ENCODE measurements at regions of chr3 and their contacts with region 1.

Region 1: GRCh38 chr3:195542698-195543499 is at the start of gene PPP1R2:
- DNase-seq: peak; percentile 88 to 94 (median 92)
- H3K4me3 ChIP-seq: peak within 1 kb of the TSS; percentile 66 to 82
- H3K4me3 Mint-ChIP-seq: peak within 1 kb of the TSS; percentile 88 to 96 (median 91)
- H3K27ac ChIP-seq: peak within 1 kb of the TSS; percentile 98
- H3K27ac Mint-ChIP-seq: peak within 1 kb of the TSS; percentile 92 to 97 (median 95)
- H3K4me1 ChIP-seq: peaks cover 77% of the 10 kb centered on the region
- H3K4me1 Mint-ChIP-seq: peaks cover 47 to 90% (median 66%) of the 10 kb centered on the region in 4 donors
- H3K27me3 ChIP-seq: no peaks in the 10 kb centered on the region
- H3K27me3 Mint-ChIP-seq: no peaks in the 10 kb centered on the region
- total RNA-seq, gene PPP1R2: 136 to 137 TPM

Region 2: DNA sequence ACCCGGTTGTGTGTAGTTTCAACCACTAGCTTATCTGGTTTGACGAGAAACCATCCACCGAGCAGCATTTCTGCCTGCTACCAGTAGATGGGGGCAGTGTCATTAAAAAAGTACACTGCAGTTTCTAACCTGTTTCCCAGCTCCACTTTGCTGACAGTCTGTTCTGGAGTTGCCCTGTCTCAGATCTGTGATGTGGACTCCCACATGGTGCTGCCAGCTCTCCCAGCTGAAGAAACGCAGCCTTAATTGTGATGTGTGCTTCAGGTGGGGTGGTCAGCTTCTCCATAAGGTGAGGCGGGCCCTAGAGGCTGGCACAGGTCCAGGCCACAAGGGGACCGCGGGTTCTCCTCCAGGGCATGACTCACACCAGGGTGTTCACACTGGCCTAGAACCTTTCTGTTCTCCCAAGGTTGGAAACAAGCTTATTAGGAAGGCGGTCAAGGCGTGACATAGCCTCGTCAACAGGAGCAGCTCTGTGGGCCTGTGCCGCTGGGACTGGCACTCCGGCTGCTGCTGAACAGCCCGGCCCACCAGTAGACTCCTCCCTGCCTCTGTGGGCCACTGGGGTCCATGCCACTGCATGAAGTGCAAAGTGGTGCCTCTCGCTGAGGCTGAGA is 860.1 kb before region 1 on chr3:
- CTCF ChIA-PET with region 1: no interaction called
- POLR2A ChIA-PET with region 1: interaction called, 12 read pairs
- intact Hi-C with region 1: no loop called
- DNase-seq: peak; percentile 59 to 74 (median 69)
- H3K4me3 ChIP-seq: no peak overlapping the region
- H3K4me3 Mint-ChIP-seq: peak overlapping the region in 1 of 8 donors; percentile 23
- H3K27ac ChIP-seq: no peak overlapping the region
- H3K27ac Mint-ChIP-seq: peak overlapping the region in 2 of 7 donors; percentile 4 to 62
- H3K4me1 ChIP-seq: peaks cover 35% of the 10 kb centered on the region
- H3K4me1 Mint-ChIP-seq: peaks cover 16 to 42% (median 29%) of the 10 kb centered on the region in 4 donors
- H3K27me3 ChIP-seq: no peaks in the 10 kb centered on the region
- H3K27me3 Mint-ChIP-seq: no peaks in the 10 kb centered on the region

Region 3: DNA sequence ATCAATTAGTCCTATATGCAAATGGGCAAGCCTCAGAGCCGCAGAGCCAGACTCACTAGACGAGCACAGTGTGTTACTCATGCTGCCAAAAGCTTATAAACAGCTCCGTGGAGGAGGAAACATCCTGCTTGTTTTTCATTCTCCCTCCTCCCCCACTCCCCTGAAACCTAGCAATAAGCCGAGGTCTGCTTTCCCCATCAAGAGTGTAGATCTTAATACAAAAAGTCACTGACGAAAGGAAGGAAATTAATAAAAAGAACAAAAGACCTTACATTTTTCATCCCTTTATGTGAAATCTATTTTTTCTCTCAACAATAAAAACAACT is 360.5 kb before region 1 on chr3:
- CTCF ChIA-PET with region 1: no interaction called
- POLR2A ChIA-PET with region 1: no interaction called
- intact Hi-C with region 1: no loop called
- DNase-seq: peak in 2 of 5 donors; percentile 7 to 13
- H3K4me3 ChIP-seq: no peak overlapping the region
- H3K4me3 Mint-ChIP-seq: peak overlapping the region; percentile 49 to 77 (median 66)
- H3K27ac ChIP-seq: no peak overlapping the region
- H3K27ac Mint-ChIP-seq: peak overlapping the region in 5 of 7 donors; percentile 5 to 67 (median 10)
- H3K4me1 ChIP-seq: peaks cover 56% of the 10 kb centered on the region
- H3K4me1 Mint-ChIP-seq: peaks cover 44 to 61% (median 52%) of the 10 kb centered on the region in 4 donors
- H3K27me3 ChIP-seq: no peaks in the 10 kb centered on the region
- H3K27me3 Mint-ChIP-seq: no peaks in the 10 kb centered on the region

Region 4: DNA sequence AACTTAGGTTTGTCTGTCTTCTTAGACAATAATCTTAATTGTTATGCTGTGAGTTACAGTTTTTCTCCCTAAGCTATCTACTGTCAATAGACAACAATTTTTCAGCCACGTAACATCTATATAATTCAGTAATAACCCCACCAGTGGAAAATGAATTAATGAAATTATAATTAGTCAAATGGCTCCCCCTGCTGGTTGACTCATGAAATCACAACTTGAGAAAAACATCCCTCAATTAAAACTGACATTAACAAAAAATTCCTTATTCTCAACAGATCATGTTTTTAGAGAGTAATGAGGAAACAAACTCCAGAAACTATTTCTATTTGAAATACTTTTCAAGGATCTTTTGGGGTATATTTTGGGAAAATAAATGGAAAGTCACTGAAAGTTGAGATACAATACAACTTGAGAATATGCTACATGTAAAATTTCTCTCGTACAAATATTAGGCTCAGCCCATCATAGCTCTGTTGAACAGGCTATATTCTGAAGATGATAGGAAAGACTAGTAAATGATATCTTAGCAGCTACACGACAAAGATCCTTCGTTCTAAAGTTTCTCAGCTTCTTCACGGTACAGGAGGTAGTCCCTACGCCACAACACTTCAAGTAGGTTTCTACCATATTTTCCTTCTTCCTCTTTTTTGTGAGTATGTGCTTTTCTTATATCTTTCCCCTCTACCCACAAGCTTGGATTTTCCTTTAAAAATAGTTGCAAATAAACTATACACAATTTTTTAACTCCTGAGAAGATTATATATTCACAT is 20.5 kb before region 1 on chr3:
- CTCF ChIA-PET with region 1: interaction called, 24 read pairs
- POLR2A ChIA-PET with region 1: interaction called, 53 read pairs
- intact Hi-C with region 1: loop called (anchors 2 kb)
- DNase-seq: peak in 4 of 5 donors; percentile 46 to 56 (median 54)
- H3K4me3 ChIP-seq: no peak overlapping the region
- H3K4me3 Mint-ChIP-seq: peak overlapping the region in 1 of 8 donors; percentile 31
- H3K27ac ChIP-seq: no peak overlapping the region
- H3K27ac Mint-ChIP-seq: peak overlapping the region; percentile 38 to 82 (median 58)
- H3K4me1 ChIP-seq: peaks cover 50% of the 10 kb centered on the region
- H3K4me1 Mint-ChIP-seq: peaks cover 36 to 51% (median 42%) of the 10 kb centered on the region in 4 donors
- H3K27me3 ChIP-seq: no peaks in the 10 kb centered on the region
- H3K27me3 Mint-ChIP-seq: no peaks in the 10 kb centered on the region

Region 5: DNA sequence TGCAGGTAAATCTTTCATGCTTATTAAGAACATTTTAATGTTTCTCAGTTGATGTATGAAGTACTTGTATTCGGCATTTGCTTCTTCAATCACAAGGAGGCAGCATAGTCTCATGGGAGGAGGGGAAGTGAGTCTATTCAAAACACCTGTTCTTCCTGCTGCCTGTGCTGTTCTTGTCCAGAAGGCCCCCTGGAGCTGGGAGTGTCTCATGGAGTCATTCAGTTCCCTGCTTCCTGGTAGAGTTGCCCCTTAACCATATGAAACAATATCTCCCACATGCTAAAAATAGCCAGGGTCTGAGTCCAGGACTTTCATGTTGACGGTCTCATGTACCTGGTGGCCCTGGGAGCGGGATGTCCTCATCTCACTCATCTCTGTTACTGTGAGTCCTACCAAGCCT is 15.7 kb after region 1 on chr3:
- CTCF ChIA-PET with region 1: interaction called, 11 read pairs
- POLR2A ChIA-PET with region 1: interaction called, 224 read pairs
- intact Hi-C with region 1: loop called (anchors 2 kb)
- DNase-seq: peak; percentile 57 to 66 (median 62)
- H3K4me3 ChIP-seq: no peak overlapping the region
- H3K4me3 Mint-ChIP-seq: no peak overlapping the region
- H3K27ac ChIP-seq: no peak overlapping the region
- H3K27ac Mint-ChIP-seq: peak overlapping the region; percentile 6 to 81 (median 57)
- H3K4me1 ChIP-seq: peaks cover 17% of the 10 kb centered on the region
- H3K4me1 Mint-ChIP-seq: peaks cover 19 to 34% (median 27%) of the 10 kb centered on the region in 4 donors
- H3K27me3 ChIP-seq: no peaks in the 10 kb centered on the region
- H3K27me3 Mint-ChIP-seq: no peaks in the 10 kb centered on the region

Region 6: GRCh38 chr3:195850857-195851543 is 308.1 kb after region 1 on chr3:
- CTCF ChIA-PET with region 1: interaction called, 3 read pairs
- POLR2A ChIA-PET with region 1: no interaction called
- intact Hi-C with region 1: loop called (anchors 5 kb)
- DNase-seq: peak; percentile 83 to 89 (median 88)
- H3K4me3 ChIP-seq: no peak overlapping the region
- H3K4me3 Mint-ChIP-seq: peak overlapping the region in 5 of 8 donors; percentile 40 to 63 (median 50)
- H3K27ac ChIP-seq: no peak overlapping the region
- H3K27ac Mint-ChIP-seq: peak overlapping the region in 2 of 7 donors; percentile 6 to 32
- H3K4me1 ChIP-seq: peaks cover 5% of the 10 kb centered on the region
- H3K4me1 Mint-ChIP-seq: peaks cover 5 to 8% (median 6%) of the 10 kb centered on the region in 4 donors
- H3K27me3 ChIP-seq: no peaks in the 10 kb centered on the region
- H3K27me3 Mint-ChIP-seq: peaks cover 0 to 4% of the 10 kb centered on the region in 2 donors